Activated CD8-positive, alpha-beta memory T cell treated with anti-CD3 and anti-CD28 coated beads, Interleukin-2, amount 10 ng/mL, durations not matched to agents 7 days and 5 days (primary cell): ENCODE measurements at regions of chr6 and their contacts with region 1.

Region 1: GRCh38 chr6:159184559-159184958 is 15.4 kb downstream of the FNDC1 start:
- DNase-seq: no peak
- ATAC-seq: no peak
- H3K4me3 Mint-ChIP-seq: no peak overlapping the region
- H3K27ac Mint-ChIP-seq: no peak overlapping the region
- H3K4me1 Mint-ChIP-seq: peaks cover 15% of the 10 kb centered on the region
- H3K27me3 Mint-ChIP-seq: peaks cover 15% of the 10 kb centered on the region

Region 2: DNA sequence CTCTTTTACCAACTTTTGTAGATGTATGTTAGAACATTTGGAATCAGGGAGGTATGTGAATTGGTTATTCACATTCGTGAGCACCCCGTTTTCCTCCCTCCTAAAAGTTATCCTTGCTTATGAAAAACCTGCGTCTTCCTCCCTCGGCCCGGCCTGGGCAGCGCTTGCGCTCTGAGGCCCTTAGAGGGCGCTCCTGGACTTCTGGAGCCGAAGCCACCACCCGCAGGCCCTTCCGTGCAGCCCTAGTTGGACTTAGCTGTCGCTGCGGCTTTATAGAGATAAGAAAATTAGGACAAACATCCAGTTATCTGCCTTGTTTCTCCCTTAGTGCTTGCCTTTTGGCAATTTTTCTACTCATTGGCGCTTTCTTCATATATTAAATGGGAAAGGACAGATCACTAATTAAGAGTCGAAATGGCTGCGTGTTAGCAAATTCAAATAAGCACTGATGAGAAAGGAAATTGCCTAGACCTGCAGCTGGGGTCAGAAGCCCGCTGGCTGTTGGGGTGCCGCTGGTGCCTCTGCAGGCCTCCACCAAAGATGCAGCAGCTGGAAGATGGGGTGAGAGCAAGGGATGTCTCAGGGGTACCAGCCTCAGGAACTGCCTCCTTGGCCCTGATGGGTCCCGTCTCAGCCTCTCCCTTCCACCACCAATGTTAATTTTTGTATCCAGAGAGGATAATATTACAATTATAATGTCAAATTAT is 10.1 kb before region 1 on chr6:
- CTCF ChIA-PET with region 1: interaction called, 10 read pairs
- DNase-seq: peak; percentile 79
- ATAC-seq: peak; percentile 84
- H3K4me3 Mint-ChIP-seq: no peak overlapping the region
- H3K27ac Mint-ChIP-seq: no peak overlapping the region
- H3K4me1 Mint-ChIP-seq: peaks cover 8% of the 10 kb centered on the region
- H3K27me3 Mint-ChIP-seq: peaks cover 63% of the 10 kb centered on the region